Transverse colon (tissue), 4 donors: ENCODE measurements at regions of chr17 and their contacts with region 1.

Region 1: GRCh38 chr17:51153210-51154072 is at the start of gene NME1:
- DNase-seq: peak; percentile 96
- H3K4me3 ChIP-seq: peak within 1 kb of the TSS; percentile 27 to 63 (median 42)
- H3K27ac ChIP-seq: peak within 1 kb of the TSS; percentile 85 to 91 (median 88)
- H3K4me1 ChIP-seq: peaks cover 9 to 24% (median 22%) of the 10 kb centered on the region in 4 donors
- H3K27me3 ChIP-seq: no peaks in the 10 kb centered on the region
- CTCF ChIP-seq: peak; percentile 64 to 82 (median 74)
- EP300 ChIP-seq: no peak
- POLR2A ChIP-seq: peak; percentile 50
- total RNA-seq, gene NME1: 8.7 to 50.4 (median 20.2) TPM

Region 2: GRCh38 chr17:49266233-49266632 is 1887.2 kb before region 1 on chr17:
- in situ Hi-C with region 1: no loop called
- intact Hi-C with region 1: no loop called
- DNase-seq: no peak
- H3K4me3 ChIP-seq: no peak overlapping the region
- H3K27ac ChIP-seq: no peak overlapping the region
- H3K4me1 ChIP-seq: no peaks in the 10 kb centered on the region
- H3K27me3 ChIP-seq: no peaks in the 10 kb centered on the region
- CTCF ChIP-seq: no peak
- EP300 ChIP-seq: no peak
- POLR2A ChIP-seq: no peak

Region 3: DNA sequence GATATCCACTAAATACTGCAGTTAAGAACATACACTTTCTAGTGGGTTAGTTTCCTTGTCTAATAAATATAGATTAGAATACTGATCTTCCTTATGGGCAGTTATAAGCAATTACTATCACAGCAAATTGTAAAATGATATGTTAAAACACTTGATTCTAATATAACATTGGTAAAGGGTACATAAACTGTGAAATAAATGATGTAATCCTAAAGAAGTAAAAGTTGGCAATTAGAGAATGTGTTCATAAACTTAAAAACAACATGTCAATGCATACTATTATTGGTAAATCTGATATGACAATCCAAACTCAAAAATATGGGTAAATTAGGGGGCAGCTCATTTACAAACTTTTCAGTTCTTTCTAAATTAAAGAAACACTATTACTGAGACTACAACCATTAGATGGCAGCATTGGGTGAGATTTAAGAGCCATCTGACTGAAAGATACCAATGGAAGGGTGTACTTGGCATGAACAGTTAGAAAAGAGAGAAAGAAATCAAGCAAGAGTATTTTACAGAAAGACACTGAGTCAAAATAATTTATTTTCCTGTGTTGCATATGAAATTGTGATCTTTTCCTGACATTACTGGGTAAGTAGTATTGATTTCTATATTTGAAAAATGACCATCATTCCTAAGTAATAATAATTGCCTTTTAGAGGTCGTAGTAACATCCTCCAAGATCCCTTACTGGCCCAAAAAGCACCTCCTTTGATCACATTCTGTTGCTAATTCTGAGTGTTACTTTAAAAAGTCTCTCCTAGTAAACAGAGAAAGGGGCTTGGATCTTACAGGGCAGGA is 152.4 kb before region 1 on chr17:
- in situ Hi-C with region 1: loop called (anchors 5 to 10 kb)
- intact Hi-C with region 1: loop called (anchors 5 kb)
- DNase-seq: no peak
- H3K4me3 ChIP-seq: no peak overlapping the region
- H3K27ac ChIP-seq: no peak overlapping the region
- H3K4me1 ChIP-seq: peaks cover 0 to 11% (median 0%) of the 10 kb centered on the region in 4 donors
- H3K27me3 ChIP-seq: no peaks in the 10 kb centered on the region
- CTCF ChIP-seq: peak; percentile 49 to 69 (median 55)
- EP300 ChIP-seq: no peak
- POLR2A ChIP-seq: no peak

Region 4: DNA sequence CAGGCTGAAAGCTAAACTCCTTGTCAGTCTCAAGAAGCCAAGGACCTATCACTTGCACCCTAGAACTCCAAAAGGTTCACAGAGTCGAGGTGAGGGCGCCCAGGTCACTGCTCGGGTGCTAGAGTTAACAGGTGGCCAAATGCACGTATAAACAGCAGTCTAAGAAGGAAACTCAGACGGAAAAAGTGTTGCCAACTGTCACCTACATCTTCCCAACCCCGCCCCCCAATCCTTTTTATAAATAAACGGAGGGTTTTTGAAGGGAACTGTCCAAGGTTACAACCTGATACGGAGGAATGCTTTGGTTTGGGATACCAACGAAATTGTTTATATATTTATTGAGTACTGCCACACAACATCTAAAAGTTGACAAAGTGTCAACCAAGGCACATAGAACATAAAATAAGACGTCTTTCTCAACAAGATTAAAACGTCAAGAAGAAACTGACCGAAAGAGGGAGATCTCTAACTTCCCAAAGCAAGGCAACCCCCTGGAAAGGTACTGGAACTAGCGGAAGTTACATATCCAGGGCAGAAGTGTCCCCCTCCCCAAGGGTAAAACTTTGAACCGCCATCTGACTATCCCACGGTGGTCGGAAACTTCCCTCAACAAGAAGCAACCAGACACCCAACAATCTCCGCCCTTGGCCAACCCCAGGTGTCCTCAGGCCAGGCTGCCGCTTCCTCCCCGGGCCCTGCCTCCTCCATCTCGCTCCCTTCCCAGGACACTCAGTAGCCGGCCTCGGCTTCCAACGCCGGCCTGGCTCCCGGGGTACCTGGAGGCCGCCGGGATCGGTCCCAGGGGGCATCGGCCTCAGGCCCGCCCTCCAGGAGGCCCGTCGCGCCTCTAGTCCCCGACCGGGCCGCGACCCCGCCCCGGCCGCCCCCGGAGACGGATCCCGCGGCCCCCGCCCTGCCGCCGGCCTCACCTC is 33.8 kb before region 1 on chr17:
- in situ Hi-C with region 1: no loop called
- intact Hi-C with region 1: loop called (anchors 2 kb)
- DNase-seq: peak; percentile 54
- H3K4me3 ChIP-seq: peak overlapping the region; percentile 59 to 98 (median 92)
- H3K27ac ChIP-seq: peak overlapping the region; percentile 99 to 100 (median 100)
- H3K4me1 ChIP-seq: peaks cover 23 to 57% (median 33%) of the 10 kb centered on the region in 4 donors
- H3K27me3 ChIP-seq: no peaks in the 10 kb centered on the region
- CTCF ChIP-seq: peak in 2 of 5 experiments; percentile 12 to 23
- EP300 ChIP-seq: no peak
- POLR2A ChIP-seq: no peak

Region 5: GRCh38 chr17:51251010-51251409 is 97.6 kb after region 1 on chr17:
- in situ Hi-C with region 1: no loop called
- intact Hi-C with region 1: no loop called
- DNase-seq: no peak
- H3K4me3 ChIP-seq: no peak overlapping the region
- H3K27ac ChIP-seq: no peak overlapping the region
- H3K4me1 ChIP-seq: peaks cover 0 to 12% (median 4%) of the 10 kb centered on the region in 4 donors
- H3K27me3 ChIP-seq: no peaks in the 10 kb centered on the region
- CTCF ChIP-seq: no peak
- EP300 ChIP-seq: no peak
- POLR2A ChIP-seq: no peak